Activated T-helper 1 cell treated with anti-CD3 and anti-CD28 coated beads, Interleukin-12 subunit alpha, Interleukin-12 subunit beta, Interleukin-2, Interleukin-4 antibody, amounts not matched to agents 30 ng/mL and 10 ng/mL and 1 ng/mL, durations not matched to agents 14 hours and 24 hours and 36 hours (primary cell): ENCODE measurements at regions of chr19 and their contacts with region 1.

Region 1: DNA sequence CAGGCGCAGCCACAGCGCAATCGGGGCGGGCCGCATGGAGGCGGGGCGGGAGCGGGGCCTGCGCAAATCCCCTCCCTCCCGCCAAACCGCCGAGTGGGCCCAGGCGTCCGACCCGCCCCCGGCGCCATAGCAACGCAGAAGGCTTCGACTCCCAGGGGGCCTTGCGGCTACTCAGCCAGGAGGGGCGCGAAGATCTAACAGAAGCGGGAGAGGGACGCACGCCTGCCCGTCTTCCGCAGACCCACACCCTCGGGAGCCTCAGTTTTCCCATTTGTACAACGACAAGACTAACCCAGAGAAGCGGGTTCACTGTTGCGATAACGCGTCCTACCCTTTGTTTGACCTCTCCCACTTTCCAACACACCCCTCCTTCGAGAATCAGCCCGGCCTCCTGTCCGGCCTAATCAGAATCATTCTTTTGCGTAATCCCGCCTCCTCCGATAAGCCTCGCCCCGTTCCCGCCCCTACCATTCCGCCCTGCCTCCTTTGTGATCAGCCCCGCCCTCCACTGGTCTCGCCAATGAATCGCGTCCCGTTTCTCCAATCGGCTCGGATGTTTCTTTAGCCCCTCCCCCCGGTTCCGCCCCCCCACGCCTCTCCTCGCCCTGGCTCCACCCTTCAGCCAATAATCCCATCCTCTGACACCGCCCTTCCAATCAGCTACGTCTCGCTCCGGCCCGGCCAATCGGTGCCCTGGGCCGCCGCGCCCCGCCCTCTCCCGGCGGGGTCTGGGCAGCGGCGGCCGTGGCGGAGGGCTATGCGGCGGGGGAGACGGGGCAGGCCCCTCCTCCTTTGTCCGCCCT is at the start of gene PCSK4:
- DNase-seq: peak; percentile 93
- H3K4me3 Mint-ChIP-seq: peak within 1 kb of the TSS; percentile 82
- H3K27ac Mint-ChIP-seq: peak within 1 kb of the TSS; percentile 74
- H3K4me1 Mint-ChIP-seq: peaks cover 11% of the 10 kb centered on the region
- H3K27me3 Mint-ChIP-seq: peaks cover 6% of the 10 kb centered on the region
- total RNA-seq, gene PCSK4: 0.26 and 1.5 TPM in 2 replicates

Region 2: GRCh38 chr19:1057176-1057855 is 433.2 kb before region 1 on chr19:
- intact Hi-C with region 1: no loop called
- DNase-seq: no peak
- H3K4me3 Mint-ChIP-seq: no peak overlapping the region
- H3K27ac Mint-ChIP-seq: no peak overlapping the region
- H3K4me1 Mint-ChIP-seq: peaks cover 19% of the 10 kb centered on the region
- H3K27me3 Mint-ChIP-seq: no peaks in the 10 kb centered on the region

Region 3: DNA sequence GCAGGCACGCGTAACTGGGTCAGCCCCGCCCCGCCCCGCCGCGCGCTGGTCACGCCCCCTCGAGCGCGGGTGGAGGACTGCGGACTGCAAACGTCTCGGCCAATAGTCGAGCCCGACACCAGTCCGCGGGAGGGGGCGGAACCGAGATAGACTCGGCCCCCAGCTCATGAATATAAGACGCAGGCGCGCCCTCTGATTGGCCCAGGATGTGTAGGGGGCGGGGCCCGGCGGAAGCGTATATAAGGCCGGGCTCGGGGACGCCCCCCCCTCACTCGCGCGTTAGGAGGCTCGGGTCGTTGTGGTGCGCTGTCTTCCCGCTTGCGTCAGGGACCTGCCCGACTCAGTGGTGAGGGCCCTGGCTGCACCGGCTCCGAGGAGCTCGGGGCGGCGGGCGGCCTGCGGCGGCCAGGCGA is 221.4 kb before region 1 on chr19 and contains the start of gene CIRBP:
- intact Hi-C with region 1: loop called (anchors 1 kb)
- DNase-seq: peak; percentile 99
- H3K4me3 Mint-ChIP-seq: peak within 1 kb of the TSS; percentile 91
- H3K27ac Mint-ChIP-seq: peak within 1 kb of the TSS; percentile 91
- H3K4me1 Mint-ChIP-seq: peaks cover 43% of the 10 kb centered on the region
- H3K27me3 Mint-ChIP-seq: no peaks in the 10 kb centered on the region
- total RNA-seq, gene CIRBP: 245 and 256 TPM in 2 replicates

Region 4: DNA sequence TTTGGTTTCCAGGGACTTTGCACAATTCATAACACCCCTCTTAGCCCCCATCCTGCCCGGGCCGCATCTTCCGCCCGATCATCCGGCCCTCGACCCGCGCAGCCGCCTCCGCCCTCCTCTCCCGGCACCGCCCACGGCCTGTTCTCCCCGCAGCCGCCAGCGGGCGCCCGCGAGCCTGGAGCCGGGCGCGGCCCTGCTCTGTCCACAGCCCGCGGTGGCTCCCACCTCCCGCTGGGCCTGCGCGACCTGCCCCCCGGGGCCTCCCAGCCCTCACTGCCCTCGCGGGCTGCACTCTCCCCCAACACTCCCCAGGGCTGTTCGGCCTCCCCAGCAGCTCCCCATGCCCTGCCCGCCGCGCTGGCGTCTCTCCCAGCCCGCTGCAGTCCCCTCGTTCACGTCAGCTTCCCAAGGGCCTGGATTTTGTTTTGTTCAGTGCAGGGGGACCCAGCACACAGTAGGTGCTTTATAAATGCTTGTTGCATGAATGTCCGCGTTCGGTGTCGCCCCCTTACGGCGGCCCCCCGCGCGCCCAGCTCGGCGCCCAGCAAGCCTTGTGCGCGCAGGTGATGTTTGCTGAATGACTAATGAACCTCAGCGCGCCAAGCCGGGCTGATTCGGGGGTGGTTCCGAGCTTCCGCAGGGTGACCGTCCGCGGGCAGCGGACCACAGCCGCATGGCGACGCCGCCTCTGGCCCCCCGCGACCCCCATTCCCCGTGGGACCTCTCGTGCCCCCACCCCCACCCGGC is 45.2 kb before region 1 on chr19:
- intact Hi-C with region 1: no loop called
- DNase-seq: peak; percentile 81
- H3K4me3 Mint-ChIP-seq: peak overlapping the region; percentile 70
- H3K27ac Mint-ChIP-seq: peak overlapping the region; percentile 63
- H3K4me1 Mint-ChIP-seq: peaks cover 7% of the 10 kb centered on the region
- H3K27me3 Mint-ChIP-seq: peaks cover 26% of the 10 kb centered on the region

Region 5: DNA sequence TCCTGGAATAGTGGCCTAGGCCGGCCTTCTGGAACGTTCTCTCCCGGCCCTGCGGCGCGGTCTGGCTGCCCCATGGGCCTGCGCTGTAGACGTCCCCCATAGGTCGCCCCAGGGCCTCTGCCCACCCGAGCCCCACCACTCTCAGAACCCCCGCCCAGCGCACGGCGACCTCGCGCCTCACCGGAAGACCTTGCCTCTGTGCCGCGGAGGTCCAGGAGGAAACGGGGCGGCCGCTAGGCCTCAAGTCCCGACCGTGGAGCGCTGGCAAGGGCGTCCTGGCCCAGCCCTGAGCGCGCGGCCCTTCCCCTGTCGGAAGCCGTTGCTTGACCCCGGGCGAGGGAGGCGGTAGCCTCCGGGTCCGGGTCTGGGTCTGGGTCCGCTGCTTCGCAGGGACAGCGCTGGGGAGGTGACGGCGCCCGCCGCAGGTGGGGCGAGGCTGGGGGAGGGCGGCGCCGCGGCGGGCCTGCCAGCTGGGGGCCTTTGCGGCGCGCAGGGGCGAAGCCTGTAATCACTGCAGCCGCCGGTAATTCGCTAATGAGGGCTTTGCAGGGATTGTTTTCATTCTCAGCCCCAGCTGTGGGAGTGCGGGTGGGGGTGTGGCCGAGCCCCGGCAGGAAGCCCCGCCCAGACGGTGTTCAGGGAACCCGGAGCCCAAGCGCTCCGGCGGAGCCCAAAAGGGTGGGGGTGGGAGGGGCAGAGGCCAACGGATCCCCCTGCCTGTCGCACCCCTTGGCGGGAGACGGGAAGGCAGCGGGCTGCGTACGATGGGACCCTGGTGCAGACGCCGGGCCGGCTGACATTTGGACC is 20.1 kb before region 1 on chr19:
- intact Hi-C with region 1: loop called (anchors 2 kb)
- DNase-seq: peak; percentile 64
- H3K4me3 Mint-ChIP-seq: peak overlapping the region; percentile 75
- H3K27ac Mint-ChIP-seq: peak overlapping the region; percentile 65
- H3K4me1 Mint-ChIP-seq: no peaks in the 10 kb centered on the region
- H3K27me3 Mint-ChIP-seq: peaks cover 12% of the 10 kb centered on the region

Region 6: DNA sequence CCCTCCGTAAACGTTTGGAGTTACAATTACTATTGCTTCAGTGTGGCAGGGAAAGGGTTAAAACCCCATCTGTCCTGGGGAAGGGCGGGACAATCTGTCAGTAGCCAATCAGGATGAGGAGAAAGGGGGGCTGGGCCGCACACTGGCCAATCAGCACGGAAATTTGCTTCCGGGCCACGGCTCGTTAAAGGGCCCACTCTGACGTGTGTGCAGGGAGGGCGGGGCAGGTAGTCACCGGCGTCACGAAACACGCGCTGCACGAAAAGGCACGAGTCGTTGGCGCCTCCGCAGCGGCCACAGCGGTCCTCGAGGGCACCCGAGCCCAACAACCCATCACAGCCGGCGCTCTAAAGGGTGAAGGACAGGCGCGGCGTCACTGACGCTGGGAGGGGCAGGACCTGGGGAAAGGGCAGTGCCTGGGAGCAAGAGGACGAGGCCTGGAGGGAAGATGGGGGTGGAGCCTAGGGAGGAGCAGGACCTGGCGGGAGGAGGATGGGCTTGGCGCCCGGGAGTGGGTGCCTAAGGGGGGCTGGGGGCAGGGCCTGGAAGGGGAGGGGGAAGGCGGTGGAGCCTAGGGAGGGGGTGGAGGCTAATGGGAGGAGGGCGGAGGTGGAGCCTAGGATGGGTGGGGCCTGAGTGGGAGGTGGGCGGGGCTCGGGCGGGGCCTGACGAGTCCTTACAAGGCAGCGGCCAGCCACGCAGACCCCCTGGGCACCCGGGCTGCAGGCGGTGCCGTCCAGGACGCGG is 17.4 kb after region 1 on chr19:
- intact Hi-C with region 1: loop called (anchors 1 kb)
- DNase-seq: peak; percentile 82
- H3K4me3 Mint-ChIP-seq: peak overlapping the region; percentile 80
- H3K27ac Mint-ChIP-seq: peak overlapping the region; percentile 77
- H3K4me1 Mint-ChIP-seq: peaks cover 6% of the 10 kb centered on the region
- H3K27me3 Mint-ChIP-seq: peaks cover 22% of the 10 kb centered on the region

Region 7: GRCh38 chr19:1592755-1593500 is 102.4 kb after region 1 on chr19 and contains the start of gene MBD3:
- intact Hi-C with region 1: loop called (anchors 2 kb)
- DNase-seq: peak; percentile 87
- H3K4me3 Mint-ChIP-seq: peak within 1 kb of the TSS; percentile 91
- H3K27ac Mint-ChIP-seq: peak within 1 kb of the TSS; percentile 91
- H3K4me1 Mint-ChIP-seq: peaks cover 20% of the 10 kb centered on the region
- H3K27me3 Mint-ChIP-seq: no peaks in the 10 kb centered on the region
- total RNA-seq, gene MBD3: 136 and 139 TPM in 2 replicates

Region 8: GRCh38 chr19:1652471-1653299 is 162.2 kb after region 1 on chr19 and contains the start of gene TCF3:
- intact Hi-C with region 1: loop called (anchors 2 kb)
- DNase-seq: peak; percentile 98
- H3K4me3 Mint-ChIP-seq: peak within 1 kb of the TSS; percentile 95
- H3K27ac Mint-ChIP-seq: peak within 1 kb of the TSS; percentile 97
- H3K4me1 Mint-ChIP-seq: peaks cover 16% of the 10 kb centered on the region
- H3K27me3 Mint-ChIP-seq: peaks cover 1% of the 10 kb centered on the region
- total RNA-seq, gene TCF3: 163 and 172 TPM in 2 replicates

Region 9: DNA sequence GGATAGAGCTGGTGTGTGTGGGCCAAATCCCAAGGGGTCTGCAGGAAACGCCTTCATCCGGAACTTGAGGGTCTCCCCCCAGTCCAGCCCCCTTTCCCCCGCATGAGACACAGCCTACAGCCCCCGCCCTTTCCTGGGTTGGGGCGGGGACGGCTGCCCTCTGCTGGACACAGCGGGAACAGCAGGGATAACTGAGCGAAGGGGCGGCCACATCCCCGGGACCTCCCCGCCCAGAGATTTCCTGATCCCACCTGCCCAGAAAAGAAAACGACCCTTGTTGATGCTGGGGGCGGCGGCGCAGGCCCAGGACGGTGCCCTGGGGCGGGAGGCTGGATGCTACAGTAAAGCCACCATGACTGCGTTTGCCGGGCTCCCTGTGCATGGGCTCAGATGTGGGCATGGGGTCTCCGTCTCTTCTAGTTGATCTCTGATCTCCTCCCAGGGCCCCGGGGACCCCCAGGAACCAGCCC is 277.0 kb after region 1 on chr19:
- intact Hi-C with region 1: no loop called
- DNase-seq: peak; percentile 42
- H3K4me3 Mint-ChIP-seq: no peak overlapping the region
- H3K27ac Mint-ChIP-seq: no peak overlapping the region
- H3K4me1 Mint-ChIP-seq: no peaks in the 10 kb centered on the region
- H3K27me3 Mint-ChIP-seq: peaks cover 66% of the 10 kb centered on the region

Region 10: DNA sequence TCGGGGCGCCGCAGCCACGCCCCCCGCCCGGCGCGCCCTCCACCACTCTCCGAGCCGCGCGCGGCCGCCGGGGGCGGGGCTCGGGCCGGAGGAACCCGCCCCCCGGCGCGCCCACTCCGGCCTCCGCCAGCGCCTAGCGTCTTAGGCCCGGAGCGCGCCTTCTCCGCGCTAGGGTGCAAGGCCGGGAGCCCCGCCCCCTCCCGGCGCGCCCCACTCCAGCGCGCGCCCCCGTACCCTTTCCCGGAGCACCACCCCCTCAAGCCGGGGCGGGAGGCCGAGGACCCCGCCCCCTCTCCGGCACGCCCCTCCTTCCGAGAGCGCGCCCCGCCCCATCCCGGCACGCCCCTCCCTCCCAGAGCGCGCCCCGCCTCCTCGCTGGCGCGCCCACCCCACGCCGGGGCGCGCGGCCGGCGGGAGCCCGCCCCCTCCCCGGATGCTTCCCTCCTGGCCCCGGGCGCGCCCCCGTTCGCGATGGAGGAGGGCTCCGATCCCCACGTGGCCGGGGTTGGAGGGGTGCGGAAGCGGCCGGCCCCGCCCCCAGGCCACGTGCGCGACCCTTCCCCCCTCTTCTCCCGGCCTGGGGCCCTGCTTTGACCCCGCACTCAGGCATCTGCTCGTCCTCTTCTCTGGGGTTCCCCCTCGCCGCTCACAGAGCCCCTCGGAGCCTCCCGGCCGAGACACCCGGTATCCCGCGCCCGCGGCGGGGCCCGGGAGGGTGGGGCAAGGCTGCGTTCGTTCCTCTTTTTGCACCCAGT is 373.4 kb after region 1 on chr19:
- intact Hi-C with region 1: loop called (anchors 5 kb)
- DNase-seq: peak; percentile 91
- H3K4me3 Mint-ChIP-seq: peak overlapping the region; percentile 76
- H3K27ac Mint-ChIP-seq: peak overlapping the region; percentile 80
- H3K4me1 Mint-ChIP-seq: peaks cover 22% of the 10 kb centered on the region
- H3K27me3 Mint-ChIP-seq: peaks cover 2% of the 10 kb centered on the region